Left ventricle myocardium superior (tissue), 1 donor: ENCODE measurements at regions of chr4 and their contacts with region 1.

Region 1: GRCh38 chr4:107913281-107913899 is 18.0 kb upstream of the CYP2U1 start:
- DNase-seq: no peak
- ATAC-seq: peak; percentile 82

Region 2: GRCh38 chr4:107757864-107758476 is 155.4 kb before region 1 on chr4:
- intact Hi-C with region 1: loop called (anchors 2 kb)
- DNase-seq: no peak
- ATAC-seq: no peak